ENCODE measurements at regions of chr11 and their contacts with region 1.

Region 1: DNA sequence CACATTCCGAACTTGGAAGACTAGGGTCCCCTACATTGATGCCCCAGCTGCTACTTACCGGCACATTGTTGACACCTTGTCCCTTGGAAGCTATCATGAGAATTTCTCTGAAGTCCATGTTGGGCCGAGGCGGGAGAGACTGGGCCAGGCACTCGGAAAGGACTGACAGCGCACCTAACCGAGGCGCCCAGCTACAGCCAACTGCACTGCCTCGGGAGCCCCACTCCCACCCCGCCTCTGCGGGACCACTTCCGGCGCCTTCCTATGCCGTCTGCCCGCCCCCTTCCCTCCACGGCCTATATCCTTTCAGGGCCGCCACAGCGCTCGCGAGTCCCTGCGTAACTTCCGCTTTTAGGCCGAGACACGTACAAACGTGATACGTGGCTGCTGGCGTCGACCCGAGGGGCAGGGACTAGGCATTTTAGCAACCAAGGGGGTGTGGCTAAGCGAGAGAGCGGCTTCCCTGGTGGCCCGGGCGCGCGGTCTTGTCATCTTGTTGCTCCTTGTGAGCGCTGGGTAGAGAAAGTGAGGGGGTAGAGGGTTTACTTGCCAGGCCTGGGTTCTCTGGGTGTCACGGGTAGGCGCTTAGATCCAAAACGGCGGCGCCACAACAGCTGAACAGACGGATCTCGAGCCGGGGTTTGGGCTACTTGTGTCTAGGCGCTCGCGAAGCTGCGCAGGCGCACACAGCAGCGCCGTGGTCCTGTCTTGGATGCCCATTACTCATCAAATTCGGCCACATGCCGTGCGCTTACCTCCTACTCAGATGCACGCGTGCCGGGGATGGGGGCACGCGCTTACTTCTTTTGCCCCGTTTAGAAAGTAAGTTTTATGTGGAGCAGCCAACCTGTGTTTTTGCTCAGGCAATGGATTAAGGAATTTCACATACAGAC is at the start of gene SPTY2D1:
- DNase-seq: peak; percentile 99
- H3K4me3 Mint-ChIP-seq: peak within 1 kb of the TSS; percentile 99
- H3K27ac Mint-ChIP-seq: peak within 1 kb of the TSS; percentile 96
- H3K4me1 Mint-ChIP-seq: peaks cover 23% of the 10 kb centered on the region
- H3K27me3 Mint-ChIP-seq: no peaks in the 10 kb centered on the region
- total RNA-seq, gene SPTY2D1: 26.9 to 31.0 TPM

Region 2: DNA sequence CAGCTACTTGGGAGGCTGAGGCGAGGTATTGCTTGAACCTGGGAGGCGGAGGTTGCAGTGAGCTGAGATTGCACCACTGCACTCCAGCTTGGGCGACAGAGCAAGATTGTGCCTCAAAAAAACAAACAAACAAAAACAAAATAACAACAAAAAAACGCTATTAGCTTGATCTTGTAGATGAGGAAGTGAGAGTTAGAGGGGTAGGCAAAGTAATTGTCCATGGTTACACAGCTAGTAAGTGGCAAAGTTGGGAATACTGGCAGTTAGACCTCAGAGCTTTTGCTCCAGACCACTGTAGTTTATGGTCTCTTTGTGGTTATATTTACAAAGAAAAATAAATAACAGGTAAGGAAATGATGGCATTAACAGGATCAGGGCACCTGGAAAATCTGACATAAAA is 207.1 kb before region 1 on chr11:
- CTCF ChIA-PET with region 1: no interaction called
- POLR2A ChIA-PET with region 1: no interaction called
- DNase-seq: no peak
- H3K4me3 Mint-ChIP-seq: no peak overlapping the region
- H3K27ac Mint-ChIP-seq: no peak overlapping the region
- H3K4me1 Mint-ChIP-seq: peaks cover 10% of the 10 kb centered on the region
- H3K27me3 Mint-ChIP-seq: no peaks in the 10 kb centered on the region

Region 3: GRCh38 chr11:18471995-18472394 is 162.4 kb before region 1 on chr11:
- CTCF ChIA-PET with region 1: no interaction called
- POLR2A ChIA-PET with region 1: no interaction called
- DNase-seq: no peak
- H3K4me3 Mint-ChIP-seq: no peak overlapping the region
- H3K27ac Mint-ChIP-seq: no peak overlapping the region
- H3K4me1 Mint-ChIP-seq: no peaks in the 10 kb centered on the region
- H3K27me3 Mint-ChIP-seq: no peaks in the 10 kb centered on the region

Region 4: GRCh38 chr11:18615628-18616392 is 18.6 kb before region 1 on chr11:
- CTCF ChIA-PET with region 1: interaction called, 65 read pairs
- POLR2A ChIA-PET with region 1: interaction called, 4 read pairs
- DNase-seq: no peak
- H3K4me3 Mint-ChIP-seq: no peak overlapping the region
- H3K27ac Mint-ChIP-seq: peak overlapping the region; percentile 10
- H3K4me1 Mint-ChIP-seq: peaks cover 43% of the 10 kb centered on the region
- H3K27me3 Mint-ChIP-seq: no peaks in the 10 kb centered on the region